Activated B cell treated with CpG ODN at 0.5 μM for 24 hours (primary cell): ENCODE measurements at regions of chr16 and their contacts with region 1.

Region 1: DNA sequence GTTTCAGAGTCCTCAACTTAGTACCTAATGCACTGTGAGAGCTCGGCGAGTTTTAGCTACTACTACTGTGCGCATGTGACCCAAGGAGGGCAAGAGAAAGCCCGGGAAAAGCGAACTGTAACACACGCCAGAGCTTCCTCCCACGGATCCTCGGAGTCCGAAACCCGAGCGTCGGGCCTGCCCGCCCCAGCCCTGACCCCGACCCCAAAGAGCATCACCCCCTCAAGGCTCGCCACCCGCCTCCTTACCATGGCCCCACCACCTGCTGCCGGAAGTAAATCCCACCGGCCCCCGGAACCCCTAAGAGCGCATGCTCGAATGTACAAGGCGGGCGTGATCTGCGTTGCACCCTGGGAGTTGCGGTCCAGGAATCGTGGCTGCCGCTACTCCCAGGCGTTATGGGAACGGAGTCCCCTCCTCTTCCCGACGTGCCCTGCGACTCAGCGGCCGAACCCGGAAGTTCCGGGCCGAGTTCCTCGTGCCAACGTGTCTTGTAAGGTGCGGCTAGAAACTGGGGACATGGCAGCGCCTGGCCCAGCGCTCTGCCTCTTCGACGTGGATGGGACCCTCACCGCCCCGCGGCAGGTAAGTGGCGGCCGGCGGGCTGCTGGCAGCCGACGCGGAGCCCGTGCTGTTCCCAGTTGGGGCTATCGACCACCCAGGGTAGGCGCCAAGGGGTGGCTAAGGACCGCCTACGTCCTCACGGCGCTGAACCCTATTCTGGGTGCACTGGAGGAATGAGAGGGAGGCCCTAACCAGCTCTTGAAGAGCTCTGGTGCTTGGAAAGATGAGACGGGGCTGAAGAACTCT is at the starts of genes PMM2 and TMEM186:
- DNase-seq: peak; percentile 91
- ATAC-seq: peak; percentile 96
- H3K4me3 Mint-ChIP-seq: peak within 1 kb of the TSS; percentile 98
- H3K27ac Mint-ChIP-seq: peak within 1 kb of the TSS; percentile 87
- H3K4me1 Mint-ChIP-seq: peaks cover 36% of the 10 kb centered on the region
- H3K27me3 Mint-ChIP-seq: no peaks in the 10 kb centered on the region
- CTCF ChIP-seq: no peak
- total RNA-seq, gene PMM2: 57.4 and 61.1 TPM in 2 replicates
- total RNA-seq, gene TMEM186: 10.6 and 13.0 TPM in 2 replicates

Region 2: DNA sequence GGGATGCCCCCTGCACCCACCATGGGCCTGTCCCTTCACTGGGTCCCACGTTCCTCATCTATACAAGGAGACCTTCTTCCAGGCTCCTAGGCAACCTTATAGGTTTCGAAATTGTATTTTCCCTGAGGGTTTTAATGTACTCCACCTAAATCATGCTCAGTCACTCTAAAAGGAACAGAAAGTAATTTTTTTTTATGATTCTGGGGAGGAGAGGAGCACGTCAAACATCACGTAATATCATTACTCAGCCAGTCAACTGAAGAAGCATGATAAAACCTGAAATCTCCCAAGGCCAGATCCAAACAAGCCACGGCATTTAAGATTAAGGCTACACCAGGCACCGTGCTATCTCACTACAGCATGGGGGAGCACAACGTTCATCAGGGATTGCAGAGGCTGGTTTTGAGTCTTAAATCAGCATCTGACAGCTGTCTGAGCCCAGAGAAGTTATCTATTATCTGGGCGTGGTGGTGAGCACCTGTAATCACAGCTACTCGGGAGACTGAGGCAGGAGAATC is 203.4 kb before region 1 on chr16:
- CTCF ChIA-PET with region 1: no interaction called
- POLR2A ChIA-PET with region 1: interaction called, 14 read pairs
- intact Hi-C with region 1: no loop called
- DNase-seq: no peak
- ATAC-seq: no peak
- H3K4me3 Mint-ChIP-seq: no peak overlapping the region
- H3K27ac Mint-ChIP-seq: no peak overlapping the region
- H3K4me1 Mint-ChIP-seq: peaks cover 5% of the 10 kb centered on the region
- H3K27me3 Mint-ChIP-seq: peaks cover 18% of the 10 kb centered on the region
- CTCF ChIP-seq: no peak

Region 3: GRCh38 chr16:8660841-8661301 is 136.7 kb before region 1 on chr16:
- CTCF ChIA-PET with region 1: no interaction called
- POLR2A ChIA-PET with region 1: interaction called, 3 read pairs
- intact Hi-C with region 1: loop called (anchors 1 kb)
- DNase-seq: no peak
- ATAC-seq: peak; percentile 45
- H3K4me3 Mint-ChIP-seq: no peak overlapping the region
- H3K27ac Mint-ChIP-seq: no peak overlapping the region
- H3K4me1 Mint-ChIP-seq: no peaks in the 10 kb centered on the region
- H3K27me3 Mint-ChIP-seq: no peaks in the 10 kb centered on the region
- CTCF ChIP-seq: no peak

Region 4: GRCh38 chr16:8868416-8869211 is 71.0 kb after region 1 on chr16 and contains the start of gene CARHSP1:
- CTCF ChIA-PET with region 1: no interaction called
- POLR2A ChIA-PET with region 1: interaction called, 28 read pairs
- intact Hi-C with region 1: loop called (anchors 1 kb)
- DNase-seq: peak; percentile 77
- ATAC-seq: peak; percentile 79
- H3K4me3 Mint-ChIP-seq: peak within 1 kb of the TSS; percentile 93
- H3K27ac Mint-ChIP-seq: peak within 1 kb of the TSS; percentile 85
- H3K4me1 Mint-ChIP-seq: peaks cover 60% of the 10 kb centered on the region
- H3K27me3 Mint-ChIP-seq: no peaks in the 10 kb centered on the region
- CTCF ChIP-seq: no peak
- total RNA-seq, gene CARHSP1: 21.3 and 27.0 TPM in 2 replicates

Region 5: DNA sequence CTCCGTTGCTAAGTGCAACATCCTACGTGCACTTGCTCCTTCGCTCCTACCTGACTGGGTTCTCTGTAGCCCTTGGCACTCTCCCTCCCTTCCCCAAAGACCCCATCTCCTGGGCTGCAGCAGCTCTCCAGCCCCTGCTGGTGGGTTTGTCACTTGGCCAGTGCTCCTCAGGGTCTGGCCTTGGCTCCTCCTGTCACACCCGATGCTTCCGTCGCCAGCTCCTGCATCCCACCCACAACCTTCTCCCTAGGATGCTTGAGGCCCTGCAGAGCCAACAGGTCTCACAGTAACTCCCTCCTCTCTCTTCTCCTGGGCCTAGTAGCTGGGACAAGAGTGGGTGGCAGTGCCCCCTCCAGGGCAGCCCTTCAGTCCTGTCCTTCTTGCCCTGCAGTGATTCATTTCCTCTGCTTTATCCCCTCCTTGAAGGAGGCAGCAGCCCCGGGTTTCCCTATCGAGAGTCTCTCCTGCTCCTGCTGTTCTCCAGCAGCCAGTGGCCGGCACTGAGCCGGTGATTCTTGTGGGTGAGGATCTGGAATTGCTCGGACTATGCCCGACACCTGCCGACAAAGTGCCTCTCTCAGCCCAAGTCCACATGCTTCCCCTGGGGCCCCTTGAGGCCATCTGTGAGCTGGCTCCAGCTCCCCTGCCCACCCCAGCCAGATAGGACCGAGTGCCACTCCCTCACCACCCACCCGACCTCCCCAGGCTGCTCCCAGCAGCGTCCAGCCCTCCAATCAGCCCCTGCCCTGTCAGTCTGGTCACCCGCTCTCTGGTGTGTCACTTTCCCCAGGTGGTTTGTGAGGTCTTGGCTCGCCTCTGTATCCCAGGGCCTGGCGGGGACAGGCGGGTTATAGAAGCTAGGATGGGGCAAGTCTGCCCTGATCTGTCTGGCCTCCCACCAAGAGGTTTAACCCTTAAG is 88.4 kb after region 1 on chr16:
- CTCF ChIA-PET with region 1: no interaction called
- POLR2A ChIA-PET with region 1: interaction called, 4 read pairs
- intact Hi-C with region 1: loop called (anchors 1 kb)
- DNase-seq: no peak
- ATAC-seq: peak; percentile 22
- H3K4me3 Mint-ChIP-seq: no peak overlapping the region
- H3K27ac Mint-ChIP-seq: peak overlapping the region; percentile 19
- H3K4me1 Mint-ChIP-seq: peaks cover 24% of the 10 kb centered on the region
- H3K27me3 Mint-ChIP-seq: peaks cover 10% of the 10 kb centered on the region
- CTCF ChIP-seq: no peak

Region 6: GRCh38 chr16:9079430-9079812 is 281.9 kb after region 1 on chr16:
- CTCF ChIA-PET with region 1: no interaction called
- POLR2A ChIA-PET with region 1: no interaction called
- intact Hi-C with region 1: loop called (anchors 1 kb)
- DNase-seq: no peak
- ATAC-seq: no peak
- H3K4me3 Mint-ChIP-seq: no peak overlapping the region
- H3K27ac Mint-ChIP-seq: peak overlapping the region; percentile 70
- H3K4me1 Mint-ChIP-seq: peaks cover 26% of the 10 kb centered on the region
- H3K27me3 Mint-ChIP-seq: no peaks in the 10 kb centered on the region
- CTCF ChIP-seq: no peak